Cardiac septum (tissue), 1 donor: ENCODE measurements at regions of chr6 and their contacts with region 1.

Region 1: DNA sequence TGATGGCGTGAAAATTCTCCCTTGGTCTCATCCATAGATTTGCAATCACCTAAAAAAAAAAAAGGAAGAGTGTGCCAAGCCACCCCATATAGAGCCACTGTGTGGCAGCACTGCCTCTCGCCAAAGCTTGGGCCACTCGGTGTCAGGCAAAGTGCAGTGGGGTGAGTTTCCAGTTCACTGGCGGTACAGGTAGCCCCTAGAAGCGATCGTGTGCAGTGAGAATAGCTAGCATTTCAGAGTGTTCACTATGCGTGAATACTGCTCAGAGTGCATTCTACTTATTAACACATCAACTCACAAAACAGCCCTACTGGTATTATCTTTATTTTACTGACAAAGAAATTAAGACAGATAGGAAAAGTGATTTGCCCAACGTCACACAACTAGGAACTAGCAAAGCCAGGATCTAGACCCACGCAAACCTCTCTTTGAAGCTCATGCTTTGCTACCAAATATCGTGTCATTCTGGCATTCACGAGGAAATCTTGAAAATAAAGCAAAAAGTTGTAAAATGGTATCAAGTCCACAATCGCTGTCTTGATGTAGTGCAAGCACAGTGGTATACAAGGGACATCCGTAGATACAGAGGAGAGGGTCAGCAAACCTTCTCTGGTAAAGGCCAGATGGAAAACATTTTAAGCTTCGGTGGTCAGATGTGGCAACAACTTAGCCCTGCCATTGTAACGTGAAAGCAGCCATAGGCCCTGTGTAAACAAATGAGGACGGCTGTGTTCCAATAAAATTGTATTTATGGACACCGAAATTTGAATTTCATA is 10.4 kb upstream of the GCNT2 start:
- DNase-seq: no peak

Region 2: DNA sequence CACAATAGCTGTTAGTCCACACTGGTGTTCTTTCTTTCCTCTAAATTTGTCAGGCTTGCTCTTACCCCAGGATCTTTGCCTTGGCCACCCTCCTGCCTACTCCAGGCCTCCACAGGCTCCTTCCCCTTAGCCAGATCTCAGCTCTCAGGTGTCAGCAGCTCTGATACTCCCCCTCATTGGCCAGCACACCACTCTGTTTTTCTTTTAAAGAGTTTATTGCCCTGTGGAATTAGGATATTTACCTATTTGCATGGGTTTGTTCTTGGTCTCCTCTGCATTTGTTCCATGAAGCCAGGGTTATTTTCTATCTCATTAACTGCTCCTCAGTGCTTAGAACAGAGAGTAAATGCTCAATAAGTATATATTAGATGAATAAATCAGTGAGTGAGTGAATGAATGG is 47.1 kb after region 1 on chr6:
- intact Hi-C with region 1: loop called (anchors 1 kb)
- DNase-seq: no peak

Region 3: GRCh38 chr6:10582774-10583508 is 72.2 kb after region 1 on chr6:
- intact Hi-C with region 1: loop called (anchors 2 kb)
- DNase-seq: no peak

Region 4: DNA sequence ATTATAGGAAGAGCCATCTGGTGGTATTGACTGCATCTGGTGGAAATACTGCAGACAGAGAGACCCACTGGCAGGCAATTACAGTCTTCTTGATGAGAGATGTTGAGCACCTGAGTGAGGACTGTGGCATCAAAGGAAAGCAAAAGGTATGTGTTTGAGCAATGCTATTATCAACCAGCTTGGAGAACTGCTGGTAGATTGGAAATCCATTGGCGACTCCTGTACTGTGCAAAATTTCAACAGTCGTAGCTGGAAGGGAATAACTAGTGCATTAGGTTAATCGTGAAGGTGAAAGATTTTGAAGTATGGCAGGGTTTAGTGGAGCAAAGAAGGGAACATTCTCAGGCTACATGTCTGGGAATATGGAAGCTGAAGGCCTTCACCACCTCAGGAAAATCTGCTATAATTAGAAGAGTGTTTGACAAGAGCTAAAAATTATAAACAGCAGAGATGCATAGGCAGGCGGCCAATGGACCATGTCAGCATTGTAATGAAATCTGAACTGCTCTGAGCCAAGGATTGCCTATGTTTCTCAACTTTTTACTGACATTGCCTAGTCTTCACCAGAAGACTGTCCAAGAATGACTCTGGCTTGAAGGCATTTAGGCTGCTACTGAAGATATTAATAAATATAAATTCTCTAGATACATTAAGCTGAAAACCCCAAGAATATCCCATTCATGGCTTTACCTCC is 99.4 kb after region 1 on chr6:
- intact Hi-C with region 1: loop called (anchors 5 kb)
- DNase-seq: no peak

Region 5: GRCh38 chr6:10694302-10695085 is 183.7 kb after region 1 on chr6 and contains the starts of genes C6orf52 and PAK1IP1:
- intact Hi-C with region 1: loop called (anchors 1 kb)
- DNase-seq: peak; percentile 97
- total RNA-seq, gene C6orf52: 1.7 TPM
- total RNA-seq, gene PAK1IP1: 9.3 TPM